ENCODE measurements at regions of chr15 and their contacts with region 1.

Region 1: GRCh38 chr15:51776952-51777574 is 25.7 kb downstream of the TMOD2 start:
- DNase-seq: peak; percentile 80
- ATAC-seq: peak; percentile 73
- H3K4me3 Mint-ChIP-seq: no peak overlapping the region
- H3K27ac Mint-ChIP-seq: no peak overlapping the region
- H3K4me1 Mint-ChIP-seq: peaks cover 9% of the 10 kb centered on the region
- H3K27me3 Mint-ChIP-seq: no peaks in the 10 kb centered on the region

Region 2: DNA sequence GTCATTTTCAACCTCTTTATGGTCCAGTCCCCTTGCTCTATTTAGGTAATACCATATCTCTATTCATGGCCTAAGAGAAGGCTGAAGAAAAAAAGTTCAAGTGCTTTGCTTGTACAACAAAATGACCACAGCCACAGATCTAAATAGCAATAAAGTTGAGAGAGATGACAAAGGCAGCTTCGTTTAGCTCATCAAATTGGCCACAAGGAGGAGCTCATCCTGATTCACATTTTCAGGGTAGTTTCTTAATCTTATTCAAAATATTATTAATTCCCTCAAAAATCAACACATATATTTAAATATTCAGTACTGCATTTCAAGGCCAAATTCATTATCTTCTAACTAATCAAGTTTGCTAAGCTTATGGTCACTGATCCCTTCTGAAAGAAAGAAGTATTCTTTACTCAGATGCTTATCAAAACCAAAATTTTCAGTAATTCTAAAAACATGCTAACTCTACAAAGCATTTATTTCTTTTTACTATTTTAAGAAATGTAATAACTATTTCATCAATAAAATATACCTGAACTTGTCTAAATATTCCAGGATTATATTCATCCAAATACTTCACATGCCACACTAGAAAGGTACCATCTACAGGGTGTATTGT is 240.0 kb before region 1 on chr15:
- CTCF ChIA-PET with region 1: interaction called, 17 read pairs
- POLR2A ChIA-PET with region 1: no interaction called
- DNase-seq: no peak
- ATAC-seq: no peak
- H3K4me3 Mint-ChIP-seq: no peak overlapping the region
- H3K27ac Mint-ChIP-seq: no peak overlapping the region
- H3K4me1 Mint-ChIP-seq: no peaks in the 10 kb centered on the region
- H3K27me3 Mint-ChIP-seq: no peaks in the 10 kb centered on the region

Region 3: DNA sequence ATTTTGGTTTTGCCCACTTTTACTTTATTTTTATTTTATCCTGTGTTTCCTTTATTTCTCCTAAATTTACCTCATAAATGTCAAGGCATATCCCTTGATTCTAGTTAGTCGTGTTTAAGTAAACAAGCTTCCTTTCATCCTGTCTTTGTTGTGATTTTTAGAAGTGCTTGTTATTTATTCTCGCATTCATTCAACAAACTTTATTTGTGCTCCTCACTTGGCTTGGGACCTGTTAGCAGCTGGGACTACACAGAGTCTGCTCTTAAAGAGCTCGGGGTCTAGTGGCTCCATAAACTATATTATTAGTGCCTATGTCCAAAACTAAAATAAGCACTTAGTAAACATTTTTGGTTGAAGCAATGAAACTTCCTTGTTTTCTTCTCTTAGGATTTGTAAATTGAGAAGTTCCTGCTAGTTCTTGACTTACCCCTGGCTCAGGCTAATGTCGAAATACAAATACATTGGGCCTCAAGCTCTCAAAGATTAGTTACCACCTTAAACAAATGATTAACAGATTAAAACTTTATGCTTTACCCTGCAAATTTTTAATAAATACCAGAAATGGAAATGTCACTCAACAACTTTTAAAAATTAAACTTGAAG is 135.4 kb before region 1 on chr15:
- CTCF ChIA-PET with region 1: interaction called, 31 read pairs
- POLR2A ChIA-PET with region 1: no interaction called
- DNase-seq: no peak
- ATAC-seq: no peak
- H3K4me3 Mint-ChIP-seq: no peak overlapping the region
- H3K27ac Mint-ChIP-seq: no peak overlapping the region
- H3K4me1 Mint-ChIP-seq: no peaks in the 10 kb centered on the region
- H3K27me3 Mint-ChIP-seq: peaks cover 8% of the 10 kb centered on the region

Region 4: DNA sequence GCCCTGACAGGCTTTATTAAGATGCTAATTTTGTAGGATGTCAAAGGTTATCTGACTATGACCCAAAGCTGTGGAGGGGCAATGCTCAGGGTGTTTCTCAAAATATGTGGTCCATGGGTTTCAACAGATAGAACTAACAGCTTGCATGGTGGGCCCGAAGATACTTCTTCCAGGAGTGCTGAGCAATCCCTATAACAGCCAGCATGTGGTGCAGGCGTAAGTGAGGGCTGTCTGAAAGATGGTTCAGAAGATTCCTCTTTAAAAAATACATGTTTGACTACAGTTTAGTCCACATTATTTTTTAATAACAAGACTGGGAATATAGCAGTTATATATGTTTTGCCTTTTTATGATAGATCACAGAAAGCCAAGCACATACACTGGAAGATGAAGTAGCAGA is 88.2 kb before region 1 on chr15:
- CTCF ChIA-PET with region 1: interaction called, 12 read pairs
- POLR2A ChIA-PET with region 1: no interaction called
- DNase-seq: no peak
- ATAC-seq: no peak
- H3K4me3 Mint-ChIP-seq: no peak overlapping the region
- H3K27ac Mint-ChIP-seq: no peak overlapping the region
- H3K4me1 Mint-ChIP-seq: peaks cover 23% of the 10 kb centered on the region
- H3K27me3 Mint-ChIP-seq: peaks cover 50% of the 10 kb centered on the region

Region 5: DNA sequence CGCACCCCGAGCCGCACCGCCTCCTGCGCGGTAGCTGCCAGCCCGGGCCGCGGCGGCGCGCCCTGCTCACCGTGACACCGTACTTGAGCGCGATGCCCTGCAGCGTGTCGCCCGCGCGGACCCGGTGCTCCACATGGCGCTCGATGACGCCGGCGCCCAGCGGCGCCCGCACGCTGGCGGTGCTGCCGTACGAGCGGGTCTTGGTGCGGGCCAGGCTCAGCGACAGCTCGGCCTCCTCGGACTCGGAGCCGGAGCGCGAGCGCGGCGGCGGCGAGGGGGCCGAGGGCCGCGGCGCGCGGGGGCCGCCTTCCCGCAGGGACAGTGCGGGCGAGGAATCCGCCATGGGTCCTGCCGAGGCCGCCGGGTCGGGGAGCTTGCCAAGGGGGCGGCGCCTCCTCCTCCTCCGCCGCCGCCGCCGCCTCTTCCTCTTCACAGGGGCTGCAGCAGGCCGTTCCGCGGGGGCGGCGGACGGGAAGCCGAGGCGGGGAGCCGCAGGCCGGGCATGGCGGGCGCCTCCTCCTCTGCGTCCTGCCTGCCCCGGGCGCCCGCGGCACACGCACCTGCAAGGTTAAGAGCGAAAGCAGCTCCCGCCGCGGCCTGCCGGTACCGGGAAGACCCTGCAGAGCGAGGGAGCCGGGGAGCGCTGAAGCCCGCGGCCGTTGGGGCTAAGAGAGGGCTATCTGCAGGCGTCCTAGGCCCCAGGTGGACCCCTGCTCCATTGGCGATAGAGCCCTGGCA is 39.6 kb before region 1 on chr15 and contains the start of gene LYSMD2:
- CTCF ChIA-PET with region 1: interaction called, 155 read pairs
- POLR2A ChIA-PET with region 1: interaction called, 10 read pairs
- DNase-seq: peak; percentile 69
- ATAC-seq: peak; percentile 74
- H3K4me3 Mint-ChIP-seq: peak within 1 kb of the TSS; percentile 82
- H3K27ac Mint-ChIP-seq: peak within 1 kb of the TSS; percentile 90
- H3K4me1 Mint-ChIP-seq: peaks cover 49% of the 10 kb centered on the region
- H3K27me3 Mint-ChIP-seq: no peaks in the 10 kb centered on the region
- total RNA-seq, gene LYSMD2: 20.6 to 21.9 TPM

Region 6: GRCh38 chr15:51793521-51794305 is 16.6 kb after region 1 on chr15:
- CTCF ChIA-PET with region 1: interaction called, 13 read pairs
- POLR2A ChIA-PET with region 1: no interaction called
- DNase-seq: no peak
- ATAC-seq: no peak
- H3K4me3 Mint-ChIP-seq: no peak overlapping the region
- H3K27ac Mint-ChIP-seq: no peak overlapping the region
- H3K4me1 Mint-ChIP-seq: peaks cover 8% of the 10 kb centered on the region
- H3K27me3 Mint-ChIP-seq: no peaks in the 10 kb centered on the region

Measured in activated CD8-positive, alpha-beta T cell treated with anti-CD3 and anti-CD28 coated beads, Interleukin-2, amount 10 ng/mL, durations not matched to agents 7 days and 5 days (primary cell).